ENCODE measurements at regions of chr1 and their contacts with region 1.

Region 1: DNA sequence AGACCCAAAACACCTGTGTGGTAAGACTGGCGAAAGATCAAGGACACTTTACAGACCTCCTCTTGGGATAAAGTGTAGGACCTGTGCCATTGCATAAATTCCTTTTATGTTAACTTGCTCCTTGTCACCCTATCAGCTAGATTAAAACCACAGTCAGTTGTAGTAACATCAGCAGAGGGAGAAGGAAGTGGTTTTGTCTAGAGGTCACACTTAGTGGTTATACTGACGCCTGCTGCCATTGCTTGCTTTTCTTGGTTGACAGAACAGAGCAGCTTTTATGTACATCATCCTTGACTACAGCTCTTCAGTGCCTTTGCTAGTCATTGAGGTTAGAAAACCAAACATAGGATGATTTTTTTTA is 101.4 kb downstream of the PBX1 start:
- DNase-seq: no peak
- H3K4me3 ChIP-seq: peak overlapping the region; percentile 39; the same call in 1 of the 2 replicates
- H3K27ac ChIP-seq: peak overlapping the region; percentile 99
- H3K4me1 ChIP-seq: peaks cover 81% of the 10 kb centered on the region
- H3K27me3 ChIP-seq: no peaks in the 10 kb centered on the region
- CTCF ChIP-seq: peak; percentile 33; the same call in 1 of the 2 replicates

Region 2: GRCh38 chr1:164611754-164612642 is 48.4 kb before region 1 on chr1:
- CTCF ChIA-PET with region 1: no interaction called
- POLR2A ChIA-PET with region 1: interaction called, 3 read pairs
- intact Hi-C with region 1: loop called (anchors 1 kb)
- DNase-seq: peak; percentile 79 to 96
- H3K4me3 ChIP-seq: no peak overlapping the region; the same call in 1 of the 2 replicates
- H3K27ac ChIP-seq: peak overlapping the region; percentile 79
- H3K4me1 ChIP-seq: peaks cover 44% of the 10 kb centered on the region
- H3K27me3 ChIP-seq: no peaks in the 10 kb centered on the region
- CTCF ChIP-seq: no peak

Region 3: DNA sequence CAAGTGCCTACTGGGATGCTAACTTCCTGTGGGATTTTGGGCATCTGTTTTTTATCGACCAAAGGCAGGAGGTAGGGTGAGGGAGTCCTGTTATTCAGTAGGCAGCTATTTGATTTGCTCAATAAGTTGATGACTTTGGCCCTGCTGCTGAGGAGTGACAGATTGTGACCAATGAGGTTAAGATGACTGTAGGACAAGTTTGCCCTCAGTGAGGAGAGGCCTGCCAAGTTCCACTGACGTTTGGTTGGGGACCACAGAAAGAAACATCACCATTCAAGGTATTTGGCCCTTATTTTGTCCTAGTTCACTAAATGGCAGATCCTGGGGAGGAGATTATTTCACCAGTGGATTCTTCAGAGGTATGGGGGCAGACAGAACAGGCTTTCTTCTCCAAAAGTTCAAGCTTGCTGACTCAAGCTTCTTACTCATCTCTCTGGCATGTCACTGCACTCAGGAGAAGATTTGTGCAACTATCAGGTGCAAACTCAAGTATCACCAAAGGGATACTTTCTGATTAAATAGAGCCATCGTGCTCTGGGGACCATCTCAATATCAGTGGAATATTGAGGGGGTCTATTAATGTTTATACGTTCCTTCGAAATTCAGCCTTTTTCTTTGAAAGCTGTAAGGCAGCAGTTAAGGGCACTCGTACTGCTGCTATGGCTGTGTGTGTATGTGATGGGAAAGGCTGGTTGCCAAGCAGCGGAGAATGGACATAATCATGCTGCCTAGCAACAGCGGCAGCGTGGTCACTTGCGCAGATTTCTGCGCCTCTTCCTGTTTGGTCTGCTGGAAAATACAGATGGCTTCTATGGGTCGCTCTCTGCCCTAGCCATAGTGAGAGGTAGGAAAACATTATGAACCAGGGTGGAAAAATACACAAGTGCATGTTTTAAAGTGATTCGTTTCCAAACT is 22.7 kb before region 1 on chr1:
- CTCF ChIA-PET with region 1: interaction called, 9 read pairs
- POLR2A ChIA-PET with region 1: no interaction called
- intact Hi-C with region 1: loop called (anchors 2 kb)
- DNase-seq: peak; percentile 73 to 92
- H3K4me3 ChIP-seq: no peak overlapping the region
- H3K27ac ChIP-seq: peak overlapping the region; percentile 86
- H3K4me1 ChIP-seq: peaks cover 61% of the 10 kb centered on the region
- H3K27me3 ChIP-seq: no peaks in the 10 kb centered on the region
- CTCF ChIP-seq: no peak

Region 4: GRCh38 chr1:164673584-164674214 is 13.3 kb after region 1 on chr1:
- CTCF ChIA-PET with region 1: no interaction called
- POLR2A ChIA-PET with region 1: no interaction called
- intact Hi-C with region 1: no loop called
- DNase-seq: no peak
- H3K4me3 ChIP-seq: no peak overlapping the region
- H3K27ac ChIP-seq: no peak overlapping the region
- H3K4me1 ChIP-seq: peaks cover 25% of the 10 kb centered on the region
- H3K27me3 ChIP-seq: no peaks in the 10 kb centered on the region
- CTCF ChIP-seq: peak; percentile 66

Region 5: GRCh38 chr1:164707868-164708331 is 47.5 kb after region 1 on chr1:
- CTCF ChIA-PET with region 1: no interaction called
- POLR2A ChIA-PET with region 1: no interaction called
- intact Hi-C with region 1: loop called (anchors 5 kb)
- DNase-seq: peak; percentile 48 to 50
- H3K4me3 ChIP-seq: no peak overlapping the region
- H3K27ac ChIP-seq: peak overlapping the region; percentile 83
- H3K4me1 ChIP-seq: peaks cover 33% of the 10 kb centered on the region
- H3K27me3 ChIP-seq: no peaks in the 10 kb centered on the region
- CTCF ChIP-seq: no peak

Region 6: GRCh38 chr1:164772635-164773034 is 112.2 kb after region 1 on chr1:
- CTCF ChIA-PET with region 1: interaction called, 3 read pairs
- POLR2A ChIA-PET with region 1: no interaction called
- intact Hi-C with region 1: loop called (anchors 2 kb)
- DNase-seq: peak; percentile 84 to 96
- H3K4me3 ChIP-seq: peak overlapping the region; percentile 25; the same call in 1 of the 2 replicates
- H3K27ac ChIP-seq: peak overlapping the region; percentile 98
- H3K4me1 ChIP-seq: peaks cover 80% of the 10 kb centered on the region
- H3K27me3 ChIP-seq: no peaks in the 10 kb centered on the region
- CTCF ChIP-seq: no peak

Region 7: DNA sequence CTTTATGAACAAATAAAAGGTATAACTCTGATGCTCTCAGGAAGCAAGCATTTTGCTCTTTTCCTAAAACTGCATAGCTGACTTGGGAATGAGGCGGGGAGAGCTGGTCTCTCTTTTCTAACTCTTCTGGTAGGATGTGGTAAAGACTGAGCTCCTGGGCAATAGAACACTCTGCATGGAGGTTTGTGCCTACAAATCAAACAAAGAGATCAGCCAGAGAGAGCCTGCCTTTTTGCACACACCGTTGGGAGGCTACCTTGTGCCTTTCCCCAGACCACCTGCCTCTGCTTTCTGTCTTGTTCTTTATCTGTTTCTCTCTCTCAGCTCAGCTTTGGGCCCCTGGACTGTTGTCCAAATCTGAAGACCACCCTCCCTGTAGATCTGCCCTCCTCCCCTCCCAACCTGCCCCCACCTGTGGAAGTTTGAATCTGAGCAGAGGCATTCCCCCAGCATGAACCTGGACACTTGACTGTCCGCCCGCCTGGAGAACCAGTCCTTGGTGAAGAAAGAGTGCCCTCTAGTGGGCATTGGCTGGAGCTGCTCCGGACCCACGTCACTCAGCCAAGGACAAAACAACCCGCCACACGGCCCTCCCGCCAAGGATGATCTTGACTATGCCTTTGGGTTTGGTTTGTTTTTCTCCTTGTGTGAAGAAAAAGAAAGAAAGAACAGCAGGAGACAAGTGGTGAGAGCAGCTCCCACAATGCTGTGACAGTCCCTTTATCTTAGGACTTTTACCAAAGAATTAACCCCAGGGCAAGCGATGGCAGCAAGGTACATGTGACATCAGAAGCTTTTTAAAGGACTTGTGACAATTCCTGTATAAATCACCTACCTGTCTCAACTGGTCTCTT is 126.8 kb after region 1 on chr1:
- CTCF ChIA-PET with region 1: no interaction called
- POLR2A ChIA-PET with region 1: no interaction called
- intact Hi-C with region 1: loop called (anchors 2 kb)
- DNase-seq: peak; percentile 66 to 78
- H3K4me3 ChIP-seq: no peak overlapping the region
- H3K27ac ChIP-seq: peak overlapping the region; percentile 54
- H3K4me1 ChIP-seq: peaks cover 22% of the 10 kb centered on the region
- H3K27me3 ChIP-seq: no peaks in the 10 kb centered on the region
- CTCF ChIP-seq: peak; percentile 95

Region 8: DNA sequence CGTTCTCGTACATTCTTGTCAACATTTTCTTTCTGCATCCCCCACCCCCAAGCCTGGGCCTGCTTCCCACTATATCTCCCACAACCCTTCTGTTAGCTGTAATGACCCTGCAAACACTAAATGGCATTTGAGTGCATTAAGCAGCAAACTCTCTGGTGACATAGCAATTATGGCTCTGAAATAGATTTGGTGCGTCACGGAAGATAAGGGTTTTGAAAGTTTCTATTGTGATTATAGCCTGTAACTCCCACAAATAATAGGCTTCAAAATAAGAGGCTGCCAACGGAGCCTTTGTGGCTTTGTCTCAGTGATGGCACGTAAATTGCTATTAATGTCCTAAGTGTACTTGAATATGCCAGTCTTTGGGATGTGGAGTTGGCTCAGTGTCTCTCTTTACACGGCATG is 176.2 kb after region 1 on chr1:
- CTCF ChIA-PET with region 1: no interaction called
- POLR2A ChIA-PET with region 1: no interaction called
- intact Hi-C with region 1: no loop called
- DNase-seq: no peak
- H3K4me3 ChIP-seq: no peak overlapping the region
- H3K27ac ChIP-seq: no peak overlapping the region
- H3K4me1 ChIP-seq: no peaks in the 10 kb centered on the region
- H3K27me3 ChIP-seq: no peaks in the 10 kb centered on the region
- CTCF ChIP-seq: no peak